ENCODE measurements at regions of chr7 and their contacts with region 1.

Region 1: DNA sequence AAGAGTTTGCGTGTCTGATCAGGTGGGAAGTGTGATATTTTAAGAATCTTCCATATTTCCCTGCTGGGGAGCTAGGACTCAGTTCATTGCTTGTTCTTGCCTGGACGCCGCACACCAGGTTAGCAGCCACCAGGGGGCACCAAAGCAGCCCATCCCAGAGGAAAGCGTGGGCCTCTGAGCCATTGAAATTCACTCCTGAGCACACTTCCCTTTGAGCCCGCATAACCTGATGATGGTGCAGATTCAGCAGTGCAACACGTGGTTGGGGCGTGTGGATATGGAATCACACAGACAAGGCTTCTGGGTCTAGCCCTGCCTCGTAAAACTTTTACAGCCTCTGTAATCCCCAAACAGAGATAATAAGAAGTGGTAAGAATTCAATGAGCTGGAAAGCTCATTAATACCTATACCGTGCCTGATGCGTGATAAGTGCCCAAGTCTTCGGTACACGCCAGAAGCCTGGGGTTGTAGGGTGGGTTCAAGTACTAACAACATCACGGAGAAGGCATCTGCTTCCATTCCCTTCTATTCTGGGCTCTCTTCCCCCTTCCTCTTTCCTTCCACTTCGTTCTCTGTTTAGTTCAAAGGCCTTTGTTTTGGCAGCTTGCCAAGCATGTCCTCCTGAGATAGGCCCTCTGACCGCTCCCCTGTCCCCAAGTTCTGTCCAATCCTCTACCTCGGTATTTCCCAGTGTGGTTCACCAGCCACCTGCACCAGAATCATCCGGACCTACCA is 130.1 kb upstream of the KMT2E start:
- DNase-seq: peak; percentile 88
- ATAC-seq: peak; percentile 98
- H3K4me3 Mint-ChIP-seq: no peak overlapping the region
- H3K27ac Mint-ChIP-seq: no peak overlapping the region
- H3K4me1 Mint-ChIP-seq: peaks cover 8% of the 10 kb centered on the region
- H3K27me3 Mint-ChIP-seq: peaks cover 14% of the 10 kb centered on the region; the same call in 1 of the 2 replicates
- CTCF ChIP-seq: peak; percentile 91

Region 2: GRCh38 chr7:104231054-104232046 is 652.5 kb before region 1 on chr7:
- CTCF ChIA-PET with region 1: interaction called, 10 read pairs
- POLR2A ChIA-PET with region 1: no interaction called
- DNase-seq: peak; percentile 54
- ATAC-seq: peak; percentile 97
- H3K4me3 Mint-ChIP-seq: peak overlapping the region; percentile 60
- H3K27ac Mint-ChIP-seq: no peak overlapping the region
- H3K4me1 Mint-ChIP-seq: peaks cover 5% of the 10 kb centered on the region; the same call in 1 of the 2 replicates
- H3K27me3 Mint-ChIP-seq: peaks cover 7% of the 10 kb centered on the region
- CTCF ChIP-seq: peak; percentile 48

Region 3: GRCh38 chr7:104650991-104651640 is 232.8 kb before region 1 on chr7:
- CTCF ChIA-PET with region 1: no interaction called
- POLR2A ChIA-PET with region 1: no interaction called
- DNase-seq: no peak
- ATAC-seq: no peak
- H3K4me3 Mint-ChIP-seq: no peak overlapping the region
- H3K27ac Mint-ChIP-seq: no peak overlapping the region
- H3K4me1 Mint-ChIP-seq: peaks cover 8% of the 10 kb centered on the region
- H3K27me3 Mint-ChIP-seq: no peaks in the 10 kb centered on the region
- CTCF ChIP-seq: no peak

Region 4: DNA sequence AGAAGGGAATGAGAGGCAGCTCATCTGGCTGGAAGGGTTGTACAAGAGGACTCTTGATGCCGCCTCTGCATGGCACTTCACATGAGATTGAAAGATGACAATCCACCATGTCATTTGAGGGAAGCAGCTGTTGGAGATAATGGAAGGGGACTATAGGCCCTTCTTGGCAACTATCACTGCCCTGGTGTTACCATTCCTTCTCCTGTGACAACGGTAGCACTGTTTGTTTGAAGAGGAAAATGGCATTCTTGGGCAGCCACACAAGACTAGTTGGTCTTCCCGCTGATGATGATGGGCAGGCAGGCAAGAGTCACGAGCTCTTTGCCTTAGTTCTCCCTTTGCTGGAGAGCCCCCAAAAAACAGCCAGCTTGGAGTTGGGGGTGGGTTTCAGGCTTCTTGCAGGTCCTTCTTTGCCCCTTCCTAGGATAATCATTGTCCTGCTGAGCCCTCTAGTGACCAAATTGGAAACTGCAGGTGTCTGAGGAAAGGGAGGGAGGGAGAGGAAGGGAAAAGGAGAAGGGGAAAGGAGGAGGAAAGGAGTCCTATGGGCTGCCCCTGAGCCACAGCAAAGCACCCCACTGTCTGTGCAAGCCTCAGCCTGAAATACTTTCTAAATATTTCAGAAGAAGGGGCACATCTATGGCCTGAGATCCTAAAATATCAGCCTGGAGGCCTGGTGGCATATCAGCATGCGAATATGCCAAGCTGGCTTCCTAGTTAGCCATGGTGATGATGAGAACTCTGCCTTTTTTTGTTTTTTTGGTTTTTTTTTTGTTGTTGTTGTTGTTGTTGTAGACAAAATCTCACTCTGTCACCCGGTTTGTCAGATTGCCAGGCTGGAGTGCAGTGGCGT is 35.5 kb before region 1 on chr7:
- CTCF ChIA-PET with region 1: interaction called, 19 read pairs
- POLR2A ChIA-PET with region 1: no interaction called
- DNase-seq: peak; percentile 84
- ATAC-seq: peak; percentile 94
- H3K4me3 Mint-ChIP-seq: no peak overlapping the region
- H3K27ac Mint-ChIP-seq: no peak overlapping the region
- H3K4me1 Mint-ChIP-seq: no peaks in the 10 kb centered on the region
- H3K27me3 Mint-ChIP-seq: no peaks in the 10 kb centered on the region
- CTCF ChIP-seq: peak; percentile 96

Region 5: GRCh38 chr7:104873346-104873849 is 10.5 kb before region 1 on chr7:
- CTCF ChIA-PET with region 1: interaction called, 31 read pairs
- POLR2A ChIA-PET with region 1: no interaction called
- DNase-seq: no peak
- ATAC-seq: no peak
- H3K4me3 Mint-ChIP-seq: no peak overlapping the region
- H3K27ac Mint-ChIP-seq: no peak overlapping the region
- H3K4me1 Mint-ChIP-seq: no peaks in the 10 kb centered on the region
- H3K27me3 Mint-ChIP-seq: peaks cover 2% of the 10 kb centered on the region; the same call in 1 of the 2 replicates
- CTCF ChIP-seq: no peak

Region 6: DNA sequence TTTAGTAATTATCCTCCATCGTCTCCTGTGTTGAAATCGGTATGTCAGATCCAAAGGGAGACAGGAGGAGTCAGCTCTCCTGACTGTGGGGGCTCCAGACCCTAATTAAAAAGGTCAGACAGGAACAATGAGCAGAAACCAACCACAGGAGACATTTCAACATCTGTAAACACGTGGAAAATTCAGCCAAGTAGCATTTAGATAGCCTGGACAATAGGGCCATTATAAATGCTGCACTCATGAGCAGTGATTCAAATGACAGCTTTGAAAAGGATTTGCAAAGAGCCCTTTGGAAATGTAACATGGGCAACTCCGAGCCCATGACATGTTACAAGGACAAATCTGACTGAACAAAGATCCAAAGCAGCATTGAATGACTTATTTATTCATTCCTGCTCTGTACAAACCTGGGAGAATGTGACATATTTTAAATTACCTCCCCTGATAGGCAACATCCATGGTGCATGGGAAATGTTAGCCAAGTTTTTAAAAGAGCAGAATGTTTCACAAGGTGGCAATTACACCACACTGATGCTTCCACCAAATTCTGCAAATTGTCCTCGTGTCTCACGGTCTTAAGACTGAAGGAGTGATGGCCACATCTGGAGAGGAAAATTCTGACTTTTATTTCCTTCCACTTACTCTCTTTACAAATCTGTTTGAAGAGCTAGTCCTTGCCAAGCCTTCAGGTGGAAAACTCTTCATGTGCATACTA is 16.8 kb after region 1 on chr7:
- CTCF ChIA-PET with region 1: interaction called, 22 read pairs
- POLR2A ChIA-PET with region 1: no interaction called
- DNase-seq: no peak
- ATAC-seq: no peak
- H3K4me3 Mint-ChIP-seq: no peak overlapping the region
- H3K27ac Mint-ChIP-seq: no peak overlapping the region
- H3K4me1 Mint-ChIP-seq: no peaks in the 10 kb centered on the region
- H3K27me3 Mint-ChIP-seq: no peaks in the 10 kb centered on the region; the same call in 1 of the 2 replicates
- CTCF ChIP-seq: no peak

Region 7: DNA sequence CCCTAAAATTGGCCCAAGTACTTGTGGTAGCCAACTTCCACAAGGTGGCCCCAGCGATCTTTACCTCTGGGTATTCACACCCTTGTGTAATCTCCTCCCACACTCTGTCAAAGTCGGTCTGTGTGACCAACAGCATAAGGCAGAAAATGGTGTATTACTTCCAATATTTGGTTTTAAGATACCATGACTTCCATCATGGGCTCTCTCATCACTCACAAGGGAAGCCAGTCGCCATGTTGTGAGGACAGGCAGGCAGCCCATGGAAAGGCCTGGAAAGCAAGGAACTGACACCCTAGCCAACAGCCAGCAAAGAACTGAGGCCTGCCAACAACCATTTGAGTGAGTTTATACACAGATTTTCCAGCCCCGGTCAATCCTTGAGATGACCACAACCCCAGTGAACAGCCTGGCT is 39.1 kb after region 1 on chr7:
- CTCF ChIA-PET with region 1: interaction called, 97 read pairs
- POLR2A ChIA-PET with region 1: interaction called, 3 read pairs
- DNase-seq: peak; percentile 73
- ATAC-seq: peak; percentile 88
- H3K4me3 Mint-ChIP-seq: no peak overlapping the region
- H3K27ac Mint-ChIP-seq: no peak overlapping the region
- H3K4me1 Mint-ChIP-seq: peaks cover 9% of the 10 kb centered on the region; the same call in 1 of the 2 replicates
- H3K27me3 Mint-ChIP-seq: no peaks in the 10 kb centered on the region
- CTCF ChIP-seq: peak; percentile 43

Region 8: GRCh38 chr7:104951546-104951945 is 67.7 kb after region 1 on chr7:
- CTCF ChIA-PET with region 1: no interaction called
- POLR2A ChIA-PET with region 1: no interaction called
- DNase-seq: no peak
- ATAC-seq: no peak
- H3K4me3 Mint-ChIP-seq: no peak overlapping the region
- H3K27ac Mint-ChIP-seq: no peak overlapping the region
- H3K4me1 Mint-ChIP-seq: peaks cover 4% of the 10 kb centered on the region
- H3K27me3 Mint-ChIP-seq: no peaks in the 10 kb centered on the region; the same call in 1 of the 2 replicates
- CTCF ChIP-seq: no peak

Region 9: DNA sequence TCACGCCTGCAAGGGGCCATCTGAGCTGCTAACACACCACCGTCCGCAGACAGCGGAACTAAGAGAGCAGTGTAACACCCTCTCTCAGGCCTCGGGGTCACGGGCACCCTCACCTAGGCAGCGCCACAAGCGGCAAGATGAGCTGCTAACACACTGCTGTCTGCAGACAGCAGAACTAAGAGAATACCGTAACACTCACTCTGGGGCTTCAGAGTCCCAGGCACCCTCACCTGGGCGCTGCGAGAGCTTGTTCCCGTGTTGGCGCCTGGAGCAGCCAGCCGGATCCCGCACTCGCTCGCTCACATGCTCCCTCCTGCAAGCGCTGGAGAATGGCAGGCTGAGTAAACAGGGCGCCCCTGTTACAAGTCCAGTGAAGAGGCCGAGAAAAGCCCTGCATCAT is 344.7 kb after region 1 on chr7:
- CTCF ChIA-PET with region 1: no interaction called
- POLR2A ChIA-PET with region 1: no interaction called
- DNase-seq: peak; percentile 59
- ATAC-seq: peak; percentile 94
- H3K4me3 Mint-ChIP-seq: peak overlapping the region; percentile 5; the same call in 1 of the 2 replicates
- H3K27ac Mint-ChIP-seq: peak overlapping the region; percentile 67
- H3K4me1 Mint-ChIP-seq: peaks cover 33% of the 10 kb centered on the region
- H3K27me3 Mint-ChIP-seq: no peaks in the 10 kb centered on the region
- CTCF ChIP-seq: no peak